Lower leg skin (tissue), 4 donors: ENCODE measurements at regions of chr18 and their contacts with region 1.

Region 1: GRCh38 chr18:54580202-54580729 is 10.8 kb upstream of the DYNAP start:
- DNase-seq: no peak
- H3K4me3 ChIP-seq: no peak overlapping the region
- CTCF ChIP-seq: no peak
- POLR2A ChIP-seq: no peak

Region 2: DNA sequence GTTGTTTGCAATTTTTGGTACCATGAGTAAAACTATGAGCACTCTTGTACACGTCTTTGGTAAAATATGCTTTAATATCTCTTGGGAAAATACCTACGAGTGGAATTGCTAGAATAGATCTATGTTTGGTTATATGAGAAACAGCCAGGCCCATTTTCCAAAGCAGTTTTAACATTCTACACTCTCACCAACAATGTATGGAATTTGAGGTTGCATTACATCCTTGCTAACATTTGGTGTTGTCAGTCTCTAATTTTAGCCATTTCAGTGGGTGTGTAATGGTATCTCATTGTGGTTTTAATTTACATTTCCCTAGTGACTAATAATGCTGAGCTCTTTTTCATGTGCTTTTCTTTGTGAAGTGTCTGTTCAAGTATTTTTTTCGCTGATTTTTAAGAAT is 1126.6 kb after region 1 on chr18:
- intact Hi-C with region 1: loop called (anchors 10 kb)
- DNase-seq: no peak
- H3K4me3 ChIP-seq: no peak overlapping the region
- CTCF ChIP-seq: no peak
- POLR2A ChIP-seq: no peak